HEK293 (cell line): ENCODE measurements at regions of chr2 and their contacts with region 1.

Region 1: GRCh38 chr2:197191177-197191939 is 119.2 kb downstream of the ANKRD44 start:
- H3K4me3 ChIP-seq: no peak overlapping the region
- H3K27ac ChIP-seq: no peak overlapping the region
- H3K4me1 ChIP-seq: no peaks in the 10 kb centered on the region
- CTCF ChIP-seq: no peak

Region 2: GRCh38 chr2:197124639-197125390 is 66.5 kb before region 1 on chr2:
- CTCF ChIA-PET with region 1: no interaction called
- POLR2A ChIA-PET with region 1: no interaction called
- H3K4me3 ChIP-seq: no peak overlapping the region
- H3K27ac ChIP-seq: no peak overlapping the region
- H3K4me1 ChIP-seq: no peaks in the 10 kb centered on the region; the same call in 1 of the 2 replicates
- CTCF ChIP-seq: no peak

Region 3: GRCh38 chr2:197179744-197180498 is 11.4 kb before region 1 on chr2:
- CTCF ChIA-PET with region 1: interaction called, 10 read pairs
- POLR2A ChIA-PET with region 1: no interaction called
- H3K4me3 ChIP-seq: no peak overlapping the region
- H3K27ac ChIP-seq: no peak overlapping the region
- H3K4me1 ChIP-seq: peaks cover 9% of the 10 kb centered on the region
- CTCF ChIP-seq: no peak

Region 4: GRCh38 chr2:197201874-197202273 is 10.5 kb after region 1 on chr2:
- CTCF ChIA-PET with region 1: interaction called, 12 read pairs
- POLR2A ChIA-PET with region 1: no interaction called
- H3K4me3 ChIP-seq: no peak overlapping the region
- H3K27ac ChIP-seq: no peak overlapping the region
- H3K4me1 ChIP-seq: no peaks in the 10 kb centered on the region
- CTCF ChIP-seq: no peak

Region 5: GRCh38 chr2:197249381-197250377 is 58.3 kb after region 1 on chr2:
- CTCF ChIA-PET with region 1: no interaction called
- POLR2A ChIA-PET with region 1: no interaction called
- H3K4me3 ChIP-seq: no peak overlapping the region
- H3K27ac ChIP-seq: no peak overlapping the region
- H3K4me1 ChIP-seq: no peaks in the 10 kb centered on the region
- CTCF ChIP-seq: no peak

Region 6: GRCh38 chr2:197777823-197778407 is 586.6 kb after region 1 on chr2:
- CTCF ChIA-PET with region 1: interaction called, 10 read pairs
- POLR2A ChIA-PET with region 1: no interaction called
- H3K4me3 ChIP-seq: no peak overlapping the region
- H3K27ac ChIP-seq: no peak overlapping the region
- H3K4me1 ChIP-seq: no peaks in the 10 kb centered on the region
- CTCF ChIP-seq: no peak